ENCODE measurements at regions of chr14 and their contacts with region 1.

Region 1: DNA sequence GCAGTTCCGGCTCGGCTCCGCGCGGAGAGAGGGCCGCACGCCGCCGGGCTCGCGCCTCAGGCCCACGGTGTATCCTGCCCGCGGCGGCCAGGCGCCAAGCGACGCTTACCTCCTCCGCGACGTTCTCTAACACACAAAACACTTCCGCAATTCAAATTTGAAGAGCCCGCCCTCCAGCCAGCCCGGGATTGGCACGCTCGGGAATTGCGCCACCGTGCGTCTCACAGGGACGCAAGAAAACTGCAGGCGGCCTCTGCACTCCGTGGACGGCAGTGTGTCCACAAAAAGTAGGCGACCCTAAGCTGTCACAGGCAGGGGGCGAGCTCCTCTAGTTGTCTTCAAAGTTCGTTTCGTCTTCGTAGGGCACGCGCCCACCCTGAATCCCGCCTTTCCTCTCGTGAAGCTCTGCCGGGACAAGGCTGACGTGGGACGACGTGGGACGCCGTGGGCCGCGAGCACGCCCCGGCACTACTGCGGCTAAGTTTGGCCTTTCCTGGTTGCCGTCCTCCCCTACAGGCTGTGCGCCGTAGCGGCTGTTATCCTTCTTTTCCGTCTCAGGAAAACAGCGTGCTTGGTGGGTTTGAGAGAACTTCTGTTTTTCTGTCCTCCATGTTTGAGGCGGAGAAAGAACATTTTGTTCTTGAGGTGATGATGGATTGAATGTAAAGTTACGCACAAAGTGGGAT is at the start of gene MIS18BP1:
- DNase-seq: peak; percentile 87 to 97 (median 94)
- ATAC-seq: peak; percentile 90
- H3K4me3 ChIP-seq: peak within 1 kb of the TSS; percentile 66 to 70
- H3K4me3 Mint-ChIP-seq: peak within 1 kb of the TSS; percentile 94
- H3K27ac ChIP-seq: peak within 1 kb of the TSS; percentile 87 to 88
- H3K27ac Mint-ChIP-seq: peak within 1 kb of the TSS; percentile 96
- H3K4me1 ChIP-seq: peaks cover 20% of the 10 kb centered on the region
- H3K4me1 Mint-ChIP-seq: peaks cover 21% of the 10 kb centered on the region
- H3K27me3 ChIP-seq: no peaks in the 10 kb centered on the region
- H3K27me3 Mint-ChIP-seq: no peaks in the 10 kb centered on the region
- CTCF ChIP-seq: peak; percentile 85
- total RNA-seq, gene MIS18BP1: 19.9 to 20.9 TPM

Region 2: DNA sequence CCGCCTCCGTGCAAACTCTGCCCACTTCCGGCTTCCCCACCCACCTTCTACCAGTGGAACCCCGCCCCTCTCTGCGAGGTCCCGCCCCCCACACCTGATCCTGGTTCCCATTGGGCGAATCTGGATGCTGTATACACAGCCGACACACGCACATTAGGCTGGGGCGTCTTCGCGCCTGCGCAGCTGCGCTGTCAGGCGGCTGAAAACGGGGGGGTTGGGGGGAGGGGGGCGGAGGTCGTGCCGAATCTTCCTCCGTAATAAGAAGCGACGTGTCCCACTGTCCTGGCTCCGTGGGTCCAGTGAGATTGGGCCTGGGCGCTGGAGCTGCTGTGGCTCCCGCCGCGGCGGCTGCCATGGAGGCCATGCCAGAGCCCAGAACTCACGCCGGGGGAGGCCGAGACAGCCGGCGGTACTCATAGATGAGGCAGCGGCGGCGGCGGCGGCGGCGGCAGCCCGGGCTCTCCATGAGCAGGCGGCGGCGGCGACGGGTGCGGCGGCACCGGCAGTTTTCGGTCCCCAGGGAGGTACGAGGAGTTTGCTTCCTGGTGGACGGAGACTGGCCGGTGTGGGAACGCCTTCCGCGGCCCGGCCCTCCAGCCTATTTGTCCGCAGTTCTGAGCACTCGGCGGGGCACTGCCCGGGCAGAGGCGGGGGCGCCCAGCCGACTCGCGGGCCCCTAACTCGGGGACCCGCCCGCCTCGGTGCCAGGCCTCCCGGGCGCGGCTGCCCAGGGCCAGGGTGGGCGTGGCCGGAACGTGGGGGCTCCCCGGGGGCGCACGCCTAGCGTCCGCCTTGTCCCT is 356.0 kb before region 1 on chr14:
- CTCF ChIA-PET with region 1: interaction called, 3 read pairs
- POLR2A ChIA-PET with region 1: no interaction called
- intact Hi-C with region 1: loop called (anchors 1 to 2 kb)
- DNase-seq: peak; percentile 98 to 99 (median 98)
- ATAC-seq: peak; percentile 97
- H3K4me3 ChIP-seq: peak overlapping the region; percentile 73 to 75
- H3K4me3 Mint-ChIP-seq: peak overlapping the region; percentile 93
- H3K27ac ChIP-seq: peak overlapping the region; percentile 86 to 92
- H3K27ac Mint-ChIP-seq: peak overlapping the region; percentile 98
- H3K4me1 ChIP-seq: peaks cover 17% of the 10 kb centered on the region
- H3K4me1 Mint-ChIP-seq: peaks cover 25% of the 10 kb centered on the region
- H3K27me3 ChIP-seq: no peaks in the 10 kb centered on the region
- H3K27me3 Mint-ChIP-seq: no peaks in the 10 kb centered on the region
- CTCF ChIP-seq: no peak

Region 3: DNA sequence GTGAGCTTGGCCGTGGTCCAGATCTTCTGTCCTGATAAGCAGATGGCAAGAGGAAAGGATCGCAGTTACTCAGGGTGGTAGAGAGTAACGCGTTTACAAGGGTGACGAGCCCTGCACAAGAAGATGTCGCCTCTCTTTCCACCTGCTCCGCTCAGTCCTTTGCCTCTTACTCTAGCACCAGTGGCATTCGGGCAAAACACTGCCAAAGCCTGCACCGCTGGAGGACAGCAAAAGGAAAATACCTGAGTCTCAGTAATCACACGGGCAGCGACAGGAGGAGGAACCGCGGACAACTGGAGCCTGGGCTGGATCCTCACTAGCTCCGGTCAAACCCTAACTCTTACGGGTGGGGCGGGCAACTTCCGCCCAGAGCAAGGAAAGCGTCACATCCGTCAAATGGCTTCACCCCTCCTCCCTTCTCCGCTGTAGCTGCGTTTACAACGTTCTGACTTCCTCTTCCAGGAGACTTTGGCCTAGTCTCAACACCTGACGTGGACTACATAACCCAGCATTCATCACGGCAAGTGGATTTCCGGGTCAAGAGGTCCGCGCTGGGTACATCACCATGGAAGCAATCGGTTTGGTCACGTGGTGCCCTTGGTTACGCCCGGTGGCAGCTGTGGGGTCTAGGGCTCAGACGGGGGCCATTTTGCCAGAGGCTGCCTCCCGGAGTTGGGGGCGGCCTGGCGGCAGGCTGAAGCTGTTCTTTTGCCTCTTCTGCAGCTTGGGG is 291.4 kb before region 1 on chr14 and contains the starts of genes KLHL28 and TOGARAM1:
- CTCF ChIA-PET with region 1: interaction called, 4 read pairs
- POLR2A ChIA-PET with region 1: interaction called, 15 read pairs
- intact Hi-C with region 1: loop called (anchors 1 to 2 kb)
- DNase-seq: peak; percentile 91 to 100 (median 95)
- ATAC-seq: peak; percentile 87
- H3K4me3 ChIP-seq: peak within 1 kb of the TSS; percentile 75 to 91
- H3K4me3 Mint-ChIP-seq: no peak within 1 kb of the TSS
- H3K27ac ChIP-seq: peak within 1 kb of the TSS; percentile 94 to 95
- H3K27ac Mint-ChIP-seq: no peak within 1 kb of the TSS
- H3K4me1 ChIP-seq: peaks cover 42% of the 10 kb centered on the region
- H3K4me1 Mint-ChIP-seq: peaks cover 66% of the 10 kb centered on the region
- H3K27me3 ChIP-seq: no peaks in the 10 kb centered on the region
- H3K27me3 Mint-ChIP-seq: no peaks in the 10 kb centered on the region
- CTCF ChIP-seq: no peak
- total RNA-seq, gene KLHL28: 49.0 to 49.1 TPM
- total RNA-seq, gene TOGARAM1: 15.5 to 17.9 TPM

Region 4: DNA sequence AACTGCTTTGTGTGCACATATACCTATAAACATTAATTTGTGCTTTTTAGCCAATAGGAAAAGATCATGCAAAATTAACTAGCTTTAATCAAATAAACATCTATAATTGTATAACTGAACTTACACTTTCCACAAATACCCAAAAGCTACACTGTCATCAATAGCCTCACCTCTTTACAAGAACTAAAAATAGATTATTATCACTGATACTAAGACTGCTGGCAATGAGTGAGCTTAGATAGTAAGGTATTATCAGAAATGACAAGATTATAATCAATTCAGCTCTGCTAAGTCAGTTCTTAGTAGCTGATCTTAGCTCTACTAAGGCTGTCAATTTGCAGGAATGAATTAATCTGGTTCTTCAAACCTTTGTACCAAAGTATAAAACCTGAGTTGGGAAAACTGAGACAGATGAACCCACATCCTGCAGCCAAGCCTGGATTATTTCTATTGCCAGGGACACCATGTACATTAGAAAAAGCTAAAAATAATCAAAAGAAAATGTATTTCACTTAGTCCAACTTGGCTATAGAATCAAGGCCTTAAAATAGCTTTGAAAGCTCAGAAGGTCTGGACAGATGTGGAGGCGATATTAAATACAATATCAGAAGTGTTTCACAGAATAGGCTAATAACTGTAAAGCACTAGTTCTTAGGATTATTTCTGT is 124.1 kb before region 1 on chr14:
- CTCF ChIA-PET with region 1: interaction called, 11 read pairs
- POLR2A ChIA-PET with region 1: interaction called, 15 read pairs
- intact Hi-C with region 1: loop called in 1 of 2 experiments (anchors 1 kb)
- DNase-seq: no peak
- ATAC-seq: no peak
- H3K4me3 ChIP-seq: no peak overlapping the region
- H3K4me3 Mint-ChIP-seq: no peak overlapping the region
- H3K27ac ChIP-seq: no peak overlapping the region
- H3K27ac Mint-ChIP-seq: no peak overlapping the region
- H3K4me1 ChIP-seq: peaks cover 10% of the 10 kb centered on the region
- H3K4me1 Mint-ChIP-seq: peaks cover 31% of the 10 kb centered on the region
- H3K27me3 ChIP-seq: no peaks in the 10 kb centered on the region
- H3K27me3 Mint-ChIP-seq: no peaks in the 10 kb centered on the region
- CTCF ChIP-seq: no peak

Region 5: GRCh38 chr14:45267071-45267470 is 13.9 kb after region 1 on chr14:
- CTCF ChIA-PET with region 1: interaction called, 10 read pairs
- POLR2A ChIA-PET with region 1: interaction called, 5 read pairs
- intact Hi-C with region 1: loop called in 1 of 2 experiments (anchors 1 kb)
- DNase-seq: no peak
- ATAC-seq: no peak
- H3K4me3 ChIP-seq: no peak overlapping the region
- H3K4me3 Mint-ChIP-seq: no peak overlapping the region
- H3K27ac ChIP-seq: no peak overlapping the region
- H3K27ac Mint-ChIP-seq: no peak overlapping the region
- H3K4me1 ChIP-seq: no peaks in the 10 kb centered on the region
- H3K4me1 Mint-ChIP-seq: no peaks in the 10 kb centered on the region
- H3K27me3 ChIP-seq: no peaks in the 10 kb centered on the region
- H3K27me3 Mint-ChIP-seq: no peaks in the 10 kb centered on the region
- CTCF ChIP-seq: no peak

Region 6: DNA sequence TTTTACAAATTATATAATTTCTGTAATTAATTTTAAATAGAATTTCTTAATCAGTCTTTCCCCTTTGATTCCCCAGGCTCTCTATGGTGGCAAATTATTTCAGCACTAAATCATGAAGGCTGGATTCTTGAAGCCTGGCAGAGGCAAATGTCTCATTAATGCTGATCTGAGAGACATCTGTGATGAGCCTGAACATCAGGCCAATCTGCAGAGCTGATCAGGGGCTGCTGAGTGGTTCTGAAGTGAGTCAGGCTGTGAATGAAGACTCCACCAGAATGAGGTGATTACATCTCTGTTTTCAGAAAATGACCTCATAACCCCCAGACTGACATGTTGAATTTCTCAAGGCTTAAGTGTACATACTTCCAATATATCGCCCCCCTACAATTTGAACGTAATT is 124.0 kb after region 1 on chr14:
- CTCF ChIA-PET with region 1: no interaction called
- POLR2A ChIA-PET with region 1: no interaction called
- intact Hi-C with region 1: no loop called
- DNase-seq: no peak
- ATAC-seq: no peak
- H3K4me3 ChIP-seq: no peak overlapping the region
- H3K4me3 Mint-ChIP-seq: no peak overlapping the region
- H3K27ac ChIP-seq: no peak overlapping the region
- H3K27ac Mint-ChIP-seq: no peak overlapping the region
- H3K4me1 ChIP-seq: no peaks in the 10 kb centered on the region
- H3K4me1 Mint-ChIP-seq: no peaks in the 10 kb centered on the region
- H3K27me3 ChIP-seq: no peaks in the 10 kb centered on the region
- H3K27me3 Mint-ChIP-seq: no peaks in the 10 kb centered on the region
- CTCF ChIP-seq: no peak

Measured in CD8-positive, alpha-beta T cell (primary cell).